ENCODE measurements at regions of chr6 and their contacts with region 1.

Region 1: GRCh38 chr6:46507426-46507825 is 16.2 kb upstream of the RCAN2 start:
- DNase-seq: no peak

Region 2: DNA sequence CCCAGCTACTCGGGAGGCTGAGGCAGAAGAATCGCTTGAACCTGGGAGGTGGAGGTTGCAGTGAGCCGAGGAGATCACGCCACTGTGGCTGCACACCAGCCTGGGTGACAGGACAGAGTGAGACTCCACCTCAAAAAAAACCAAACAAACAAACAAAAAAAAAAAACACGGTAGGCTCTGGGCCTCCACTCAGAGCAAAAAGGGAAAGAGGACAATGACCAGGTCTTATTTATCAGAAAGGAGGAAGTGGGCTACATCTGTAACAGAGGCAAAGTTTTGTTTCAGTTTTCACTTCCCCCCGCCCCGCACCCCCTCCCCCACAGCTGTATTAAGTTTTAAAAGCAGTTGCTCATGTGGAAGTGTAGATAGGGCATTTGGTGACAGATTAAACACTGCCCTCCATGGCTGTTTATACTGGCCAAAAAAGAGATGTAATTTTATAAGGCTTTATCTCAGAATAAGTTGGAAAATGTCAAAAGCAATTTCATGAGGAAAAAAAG is 130.8 kb before region 1 on chr6:
- intact Hi-C with region 1: no loop called
- DNase-seq: no peak

Region 3: GRCh38 chr6:46612645-46613044 is 105.2 kb after region 1 on chr6:
- intact Hi-C with region 1: loop called (anchors 5 kb)
- DNase-seq: no peak